WTC11 (cell line): ENCODE measurements at regions of chr6 and their contacts with region 1.

Region 1: GRCh38 chr6:156953479-156954146 is 176.4 kb downstream of the ARID1B start:
- DNase-seq: no peak
- ATAC-seq: peak; percentile 75
- H3K4me3 Mint-ChIP-seq: peak overlapping the region; percentile 37
- H3K27ac Mint-ChIP-seq: peak overlapping the region; percentile 69
- H3K4me1 Mint-ChIP-seq: peaks cover 62% of the 10 kb centered on the region
- H3K27me3 Mint-ChIP-seq: no peaks in the 10 kb centered on the region
- CTCF ChIP-seq: no peak

Region 2: GRCh38 chr6:156852132-156852857 is 101.3 kb before region 1 on chr6:
- CTCF ChIA-PET with region 1: no interaction called
- POLR2A ChIA-PET with region 1: no interaction called
- DNase-seq: no peak
- ATAC-seq: no peak
- H3K4me3 Mint-ChIP-seq: peak overlapping the region; percentile 64
- H3K27ac Mint-ChIP-seq: peak overlapping the region; percentile 96
- H3K4me1 Mint-ChIP-seq: peaks cover 96% of the 10 kb centered on the region
- H3K27me3 Mint-ChIP-seq: no peaks in the 10 kb centered on the region
- CTCF ChIP-seq: no peak

Region 3: GRCh38 chr6:156933201-156934068 is 20.2 kb before region 1 on chr6:
- CTCF ChIA-PET with region 1: interaction called, 11 read pairs
- POLR2A ChIA-PET with region 1: no interaction called
- DNase-seq: peak; percentile 31
- ATAC-seq: peak; percentile 83
- H3K4me3 Mint-ChIP-seq: no peak overlapping the region; the same call in none of the 2 replicates
- H3K27ac Mint-ChIP-seq: peak overlapping the region; percentile 57
- H3K4me1 Mint-ChIP-seq: peaks cover 68% of the 10 kb centered on the region
- H3K27me3 Mint-ChIP-seq: no peaks in the 10 kb centered on the region
- CTCF ChIP-seq: no peak

Region 4: GRCh38 chr6:156942266-156942665 is 11.3 kb before region 1 on chr6:
- CTCF ChIA-PET with region 1: interaction called, 11 read pairs
- POLR2A ChIA-PET with region 1: no interaction called
- DNase-seq: peak; percentile 48
- ATAC-seq: peak; percentile 66
- H3K4me3 Mint-ChIP-seq: no peak overlapping the region
- H3K27ac Mint-ChIP-seq: peak overlapping the region; percentile 23; the same call in 1 of the 2 replicates
- H3K4me1 Mint-ChIP-seq: peaks cover 75% of the 10 kb centered on the region
- H3K27me3 Mint-ChIP-seq: no peaks in the 10 kb centered on the region
- CTCF ChIP-seq: no peak